Dendritic cell treated with granulocyte-macrophage colony-stimulating factor and Interleukin-4, amounts not matched to agents 40 ng/mL and 50 ng/mL, for 4 days (primary cell): ENCODE measurements at regions of chr21 and their contacts with region 1.

Region 1: GRCh38 chr21:33360881-33361602 is 36.3 kb downstream of the IFNAR1 start:
- H3K4me3 Mint-ChIP-seq: peak overlapping the region; percentile 27
- H3K27ac Mint-ChIP-seq: peak overlapping the region; percentile 84
- H3K4me1 Mint-ChIP-seq: peaks cover 41% of the 10 kb centered on the region
- H3K27me3 Mint-ChIP-seq: no peaks in the 10 kb centered on the region

Region 2: DNA sequence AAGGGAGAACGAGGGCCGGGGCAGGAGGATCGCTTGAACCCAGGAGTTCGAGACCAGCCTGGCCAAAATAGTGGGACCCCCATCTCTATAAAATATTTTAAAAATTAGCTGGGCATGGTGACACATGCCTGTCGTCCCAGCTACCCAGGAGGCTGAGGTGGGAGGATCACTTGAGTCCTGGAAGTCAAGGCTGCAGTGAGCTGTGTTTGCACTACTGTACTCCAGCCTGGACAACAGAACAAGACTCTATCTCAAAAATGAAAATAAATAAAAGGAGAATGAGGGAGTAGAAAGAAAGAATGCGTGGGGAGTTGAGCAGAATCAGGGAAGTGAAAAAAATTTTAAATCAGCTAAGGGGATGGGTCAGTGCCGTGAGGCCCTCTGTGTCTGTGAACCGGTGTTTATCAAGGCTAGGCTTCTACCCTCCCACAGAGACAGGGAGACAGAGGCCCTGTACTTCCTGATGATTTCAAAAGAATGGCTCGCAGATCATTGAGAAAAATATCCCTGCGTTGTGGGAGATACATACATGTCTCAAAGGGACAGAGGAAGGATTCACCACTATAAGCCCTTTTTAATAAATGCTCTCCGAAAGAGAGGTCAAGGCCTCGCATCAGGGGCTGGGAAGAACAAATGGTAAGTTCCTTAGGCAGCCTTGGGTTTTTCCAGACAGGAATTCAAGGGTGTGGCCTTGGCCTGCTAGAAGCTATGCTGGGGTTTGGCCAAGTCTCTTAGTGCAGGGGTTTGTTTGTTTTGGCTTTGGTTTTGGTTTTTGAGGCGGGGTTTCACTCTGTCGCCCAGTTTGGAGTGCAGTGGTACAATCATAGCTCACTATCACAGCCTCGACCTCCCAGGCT is 74.2 kb before region 1 on chr21:
- intact Hi-C with region 1: no loop called
- H3K4me3 Mint-ChIP-seq: no peak overlapping the region
- H3K27ac Mint-ChIP-seq: peak overlapping the region; percentile 70
- H3K4me1 Mint-ChIP-seq: peaks cover 19% of the 10 kb centered on the region
- H3K27me3 Mint-ChIP-seq: no peaks in the 10 kb centered on the region

Region 3: DNA sequence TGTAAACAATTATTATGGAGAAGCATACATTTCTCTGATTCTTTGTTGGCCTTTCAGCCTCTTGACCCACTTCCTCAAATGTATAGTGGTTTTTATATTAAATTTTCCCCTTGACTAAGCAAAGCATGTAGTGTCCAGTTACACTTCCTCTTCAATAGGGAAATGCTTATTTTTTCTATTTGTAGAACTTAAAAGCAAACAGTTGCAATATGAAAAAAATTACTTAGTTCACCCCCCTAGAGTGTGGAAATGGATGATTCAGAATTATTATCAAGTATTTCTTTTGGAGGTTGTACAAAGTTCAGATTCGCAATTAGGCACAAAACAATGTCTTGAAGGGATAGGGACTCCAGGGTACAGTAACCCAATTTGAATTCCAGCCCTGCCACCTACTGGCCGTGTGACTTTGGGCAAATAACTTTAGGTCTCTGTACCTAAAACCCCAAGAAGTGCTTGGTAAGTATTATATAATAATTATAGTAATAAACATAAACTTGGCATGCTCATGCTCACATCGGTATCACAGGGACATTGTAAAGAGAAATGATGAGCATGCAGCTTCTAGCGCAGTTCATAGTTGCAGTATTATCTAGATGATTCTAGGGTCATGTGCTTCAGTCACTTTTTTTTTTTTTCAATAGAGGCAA is 13.5 kb after region 1 on chr21:
- intact Hi-C with region 1: loop called (anchors 1 kb)
- H3K4me3 Mint-ChIP-seq: no peak overlapping the region
- H3K27ac Mint-ChIP-seq: peak overlapping the region; percentile 87
- H3K4me1 Mint-ChIP-seq: peaks cover 60% of the 10 kb centered on the region
- H3K27me3 Mint-ChIP-seq: no peaks in the 10 kb centered on the region

Region 4: DNA sequence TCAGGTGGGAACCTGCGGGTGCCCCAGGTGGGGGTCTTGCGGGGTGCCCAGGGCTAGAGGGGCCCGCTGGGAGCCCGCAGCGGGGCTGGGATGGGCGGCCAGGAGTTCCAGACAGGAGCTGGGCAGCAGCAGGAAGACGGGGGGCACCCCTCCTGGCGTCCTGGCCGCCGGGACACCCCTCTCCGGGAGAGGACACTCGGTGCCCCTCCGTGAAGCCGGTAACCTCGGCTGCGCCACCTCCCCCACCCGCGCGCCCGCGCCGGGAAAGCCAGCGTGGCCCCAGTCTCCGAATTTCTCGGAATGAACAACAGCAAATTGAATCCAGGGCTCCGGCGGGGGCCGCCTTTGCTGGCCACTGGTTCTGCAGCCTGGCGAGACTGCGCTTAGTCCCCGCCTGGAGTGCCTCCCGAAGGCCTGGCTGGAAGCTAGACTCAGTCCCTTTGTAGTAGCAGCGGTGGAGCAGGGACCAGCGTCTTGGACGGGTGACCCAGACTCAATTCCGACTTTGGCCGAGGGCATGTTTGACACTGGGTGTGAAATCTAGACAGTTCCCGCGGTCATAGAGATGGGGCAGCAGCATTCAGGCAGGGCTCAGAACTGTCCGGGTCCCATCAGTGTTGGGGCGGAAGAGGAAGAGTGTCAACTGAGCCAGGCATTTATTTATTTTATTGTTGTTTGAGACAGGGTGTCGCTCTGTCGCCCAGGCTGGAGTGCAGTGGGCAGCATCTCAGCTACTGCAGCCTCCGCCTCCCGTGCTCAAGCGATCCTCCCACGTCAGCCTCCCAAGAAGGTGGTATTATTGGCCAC is 42.9 kb after region 1 on chr21:
- intact Hi-C with region 1: loop called (anchors 2 kb)
- H3K4me3 Mint-ChIP-seq: peak overlapping the region; percentile 98
- H3K27ac Mint-ChIP-seq: peak overlapping the region; percentile 99
- H3K4me1 Mint-ChIP-seq: peaks cover 74% of the 10 kb centered on the region
- H3K27me3 Mint-ChIP-seq: no peaks in the 10 kb centered on the region

Region 5: DNA sequence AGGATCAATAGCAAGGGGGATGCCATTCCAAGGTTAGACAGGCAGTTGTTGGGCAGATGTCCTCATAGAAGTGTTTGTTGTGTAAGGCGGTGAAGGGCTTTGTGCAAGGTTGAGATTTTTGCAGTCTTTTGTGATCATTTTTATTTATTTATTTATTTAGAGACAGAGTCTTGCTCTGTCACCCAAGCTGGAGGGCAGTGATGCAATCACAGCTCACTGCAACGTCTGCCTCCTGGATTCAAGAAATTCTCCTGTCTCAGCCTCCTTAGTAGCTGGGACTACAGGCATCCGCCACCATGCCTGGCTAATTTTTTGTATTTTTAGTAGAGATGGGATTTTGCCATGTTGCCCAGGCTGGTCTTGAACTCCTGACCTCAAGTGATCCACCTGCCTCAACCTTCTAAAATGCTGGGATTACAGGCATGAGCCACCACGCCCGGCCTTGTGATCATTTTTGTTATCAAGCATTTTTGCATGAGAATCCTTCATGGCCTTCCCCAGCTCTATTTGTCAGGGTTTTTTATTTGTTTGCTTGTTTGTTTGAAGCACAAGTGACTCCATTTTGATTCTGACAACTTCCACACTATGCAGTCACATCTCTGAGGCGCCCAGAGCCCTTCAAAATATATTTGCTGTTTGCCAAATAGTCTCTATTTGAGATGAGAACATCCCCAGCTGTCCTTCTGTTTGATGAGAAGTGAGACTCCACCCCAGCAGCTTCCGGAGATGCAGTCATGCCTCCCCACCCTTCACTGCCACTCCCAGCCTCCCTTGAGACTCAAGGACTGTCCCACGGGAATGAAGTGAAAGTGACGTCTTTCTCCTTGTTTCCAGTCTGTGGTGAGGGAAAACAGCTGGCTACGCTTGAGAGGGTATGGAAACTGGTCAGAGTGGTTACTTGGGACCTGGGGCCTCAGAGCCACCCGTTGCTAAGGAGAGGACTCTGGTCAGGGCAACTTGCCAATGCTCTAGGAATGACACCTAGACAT is 80.7 kb after region 1 on chr21:
- intact Hi-C with region 1: loop called (anchors 1 kb)
- H3K4me3 Mint-ChIP-seq: peak overlapping the region; percentile 26
- H3K27ac Mint-ChIP-seq: peak overlapping the region; percentile 66
- H3K4me1 Mint-ChIP-seq: peaks cover 38% of the 10 kb centered on the region
- H3K27me3 Mint-ChIP-seq: no peaks in the 10 kb centered on the region

Region 6: GRCh38 chr21:33458861-33459260 is 97.8 kb after region 1 on chr21:
- intact Hi-C with region 1: no loop called
- H3K4me3 Mint-ChIP-seq: no peak overlapping the region
- H3K27ac Mint-ChIP-seq: no peak overlapping the region
- H3K4me1 Mint-ChIP-seq: no peaks in the 10 kb centered on the region
- H3K27me3 Mint-ChIP-seq: no peaks in the 10 kb centered on the region